ENCODE measurements at regions of chr2 and their contacts with region 1.

Region 1: DNA sequence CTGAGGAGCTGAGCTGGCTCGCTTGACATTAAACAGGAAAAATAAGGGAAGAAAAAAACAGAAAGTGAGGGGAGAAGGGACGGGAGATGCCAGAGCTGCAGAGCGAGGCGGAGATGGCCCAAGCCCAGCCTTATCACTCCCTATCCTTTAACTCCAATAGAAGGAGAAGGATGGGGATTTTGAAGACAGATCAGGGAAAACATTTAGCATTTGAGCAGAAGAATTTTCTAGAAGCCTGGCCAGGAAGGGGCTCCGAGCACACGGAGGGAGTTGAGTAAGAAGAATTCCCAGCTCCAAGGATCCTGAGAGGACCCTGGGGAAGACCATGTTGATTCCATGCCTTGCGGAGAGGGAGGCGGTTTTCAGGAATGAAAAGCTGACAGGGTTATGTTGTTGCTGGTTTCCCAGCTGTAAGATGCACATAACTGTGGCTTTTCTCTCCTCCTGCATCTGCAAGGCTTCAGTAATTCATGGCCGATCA is 35.6 kb downstream of the TWIST2 start:
- DNase-seq: no peak
- H3K4me3 ChIP-seq: peak overlapping the region in 1 of 4 donors; percentile 18
- H3K27ac ChIP-seq: peak overlapping the region; percentile 0 to 70 (median 50)
- H3K4me1 ChIP-seq: peaks cover 2 to 17% (median 9%) of the 10 kb centered on the region in 4 donors
- H3K27me3 ChIP-seq: no peaks in the 10 kb centered on the region
- CTCF ChIP-seq: no peak
- EP300 ChIP-seq: no peak
- POLR2A ChIP-seq: no peak

Region 2: GRCh38 chr2:239418918-239419317 is 535.5 kb after region 1 on chr2:
- in situ Hi-C with region 1: no loop called
- intact Hi-C with region 1: loop called (anchors 5 kb)
- DNase-seq: no peak
- H3K4me3 ChIP-seq: no peak overlapping the region
- H3K27ac ChIP-seq: no peak overlapping the region
- H3K4me1 ChIP-seq: no peaks in the 10 kb centered on the region
- H3K27me3 ChIP-seq: peaks cover 7% of the 10 kb centered on the region
- CTCF ChIP-seq: no peak
- EP300 ChIP-seq: no peak
- POLR2A ChIP-seq: no peak

Measured in transverse colon (tissue), 4 donors.